Right ventricle myocardium inferior (tissue), 1 donor: ENCODE measurements at regions of chr16 and their contacts with region 1.

Region 1: GRCh38 chr16:56513972-56514371 is 5.9 kb downstream of the BBS2 start:
- DNase-seq: no peak
- ATAC-seq: peak; percentile 57

Region 2: GRCh38 chr16:56203052-56203451 is 310.9 kb before region 1 on chr16:
- intact Hi-C with region 1: no loop called
- DNase-seq: no peak
- ATAC-seq: peak; percentile 68

Region 3: GRCh38 chr16:56600398-56600999 is 86.5 kb after region 1 on chr16:
- intact Hi-C with region 1: loop called (anchors 2 kb)
- DNase-seq: no peak
- ATAC-seq: no peak